Heart left ventricle (tissue), 16 donors: ENCODE measurements at regions of chr1 and their contacts with region 1.

Region 1: GRCh38 chr1:220706476-220706875 is 16.3 kb downstream of the C1orf115 start:
- DNase-seq: no peak
- ATAC-seq: no peak
- H3K4me3 ChIP-seq: no peak overlapping the region
- H3K27ac ChIP-seq: peak overlapping the region in 1 of 12 donors; percentile 5
- H3K4me1 ChIP-seq: peaks cover 0 to 40% (median 13%) of the 10 kb centered on the region in 12 donors
- H3K27me3 ChIP-seq: no peaks in the 10 kb centered on the region
- CTCF ChIP-seq: no peak
- POLR2A ChIP-seq: no peak

Region 2: GRCh38 chr1:220579317-220579716 is 127.2 kb before region 1 on chr1:
- intact Hi-C with region 1: no loop called
- DNase-seq: no peak
- ATAC-seq: no peak
- H3K4me3 ChIP-seq: no peak overlapping the region
- H3K27ac ChIP-seq: no peak overlapping the region
- H3K4me1 ChIP-seq: no peaks in the 10 kb centered on the region
- H3K27me3 ChIP-seq: no peaks in the 10 kb centered on the region
- CTCF ChIP-seq: no peak
- POLR2A ChIP-seq: no peak

Region 3: GRCh38 chr1:220726634-220727033 is 20.2 kb after region 1 on chr1:
- intact Hi-C with region 1: loop called in 1 of 10 experiments (anchors 1 kb)
- DNase-seq: no peak
- ATAC-seq: no peak
- H3K4me3 ChIP-seq: no peak overlapping the region
- H3K27ac ChIP-seq: no peak overlapping the region
- H3K4me1 ChIP-seq: peaks cover 0 to 2% (median 0%) of the 10 kb centered on the region in 12 donors
- H3K27me3 ChIP-seq: no peaks in the 10 kb centered on the region
- CTCF ChIP-seq: peak in 7 of 12 donors; percentile 9 to 28 (median 13)
- POLR2A ChIP-seq: no peak